Activated naive CD8-positive, alpha-beta T cell treated with anti-CD3 and anti-CD28 coated beads, Interleukin-2, amount 10 ng/mL, durations not matched to agents 7 days and 5 days (primary cell): ENCODE measurements at regions of chr16 and their contacts with region 1.

Region 1: GRCh38 chr16:70289229-70290098 is at the start of gene AARS1:
- DNase-seq: peak; percentile 93
- ATAC-seq: peak; percentile 97
- H3K4me3 Mint-ChIP-seq: peak within 1 kb of the TSS; percentile 99
- H3K27ac Mint-ChIP-seq: peak within 1 kb of the TSS; percentile 99
- H3K4me1 Mint-ChIP-seq: peaks cover 24% of the 10 kb centered on the region
- H3K27me3 Mint-ChIP-seq: no peaks in the 10 kb centered on the region
- total RNA-seq, gene AARS1: 121 to 122 TPM

Region 2: DNA sequence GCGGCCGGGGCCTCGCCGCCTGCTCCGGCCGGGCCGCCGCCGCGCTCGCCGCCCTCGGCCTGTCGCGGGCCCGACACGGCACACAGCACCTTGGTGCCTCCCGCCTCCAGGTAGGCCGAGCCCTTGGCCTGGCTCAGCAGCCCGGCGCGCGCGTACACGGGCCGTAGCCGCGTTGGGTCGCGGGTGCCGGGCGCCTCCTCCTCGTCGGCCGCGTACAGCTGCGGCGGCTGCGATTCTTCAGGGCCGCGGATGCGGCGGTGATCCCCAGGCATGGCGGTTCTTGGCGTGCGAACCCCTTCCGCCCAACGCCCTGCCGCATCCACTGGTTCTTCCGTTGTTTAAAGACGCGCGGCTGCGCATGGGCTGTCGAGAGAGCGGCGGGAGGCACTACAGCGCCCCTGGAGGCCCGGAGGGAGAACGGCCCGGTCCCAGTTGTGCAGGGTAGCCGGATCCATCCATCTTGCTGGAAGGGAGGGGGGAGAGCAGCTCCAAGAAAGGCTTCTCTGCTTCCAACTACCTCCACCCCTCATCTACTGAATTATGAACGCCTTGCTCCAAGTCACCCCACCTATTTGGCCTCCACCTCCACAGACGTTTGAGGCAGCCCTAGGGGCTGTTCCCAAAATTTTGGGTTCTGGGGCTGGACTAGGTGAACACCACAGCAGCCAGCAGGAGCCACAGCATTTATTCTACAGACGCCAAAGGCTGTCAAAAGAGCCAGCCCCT is 37.7 kb before region 1 on chr16 and contains the start of gene EXOSC6:
- POLR2A ChIA-PET with region 1: interaction called, 21 read pairs
- DNase-seq: peak; percentile 93
- ATAC-seq: peak; percentile 86
- H3K4me3 Mint-ChIP-seq: peak within 1 kb of the TSS; percentile 88
- H3K27ac Mint-ChIP-seq: peak within 1 kb of the TSS; percentile 92
- H3K4me1 Mint-ChIP-seq: peaks cover 14% of the 10 kb centered on the region
- H3K27me3 Mint-ChIP-seq: no peaks in the 10 kb centered on the region
- total RNA-seq, gene EXOSC6: 28.8 to 29.4 TPM

Region 3: GRCh38 chr16:70276392-70276791 is 13.1 kb before region 1 on chr16:
- POLR2A ChIA-PET with region 1: interaction called, 10 read pairs
- DNase-seq: no peak
- ATAC-seq: no peak
- H3K4me3 Mint-ChIP-seq: no peak overlapping the region
- H3K27ac Mint-ChIP-seq: no peak overlapping the region
- H3K4me1 Mint-ChIP-seq: peaks cover 6% of the 10 kb centered on the region
- H3K27me3 Mint-ChIP-seq: no peaks in the 10 kb centered on the region

Region 4: GRCh38 chr16:70320121-70320520 is 30.7 kb after region 1 on chr16:
- POLR2A ChIA-PET with region 1: no interaction called
- DNase-seq: no peak
- ATAC-seq: no peak
- H3K4me3 Mint-ChIP-seq: no peak overlapping the region
- H3K27ac Mint-ChIP-seq: no peak overlapping the region
- H3K4me1 Mint-ChIP-seq: peaks cover 1% of the 10 kb centered on the region
- H3K27me3 Mint-ChIP-seq: no peaks in the 10 kb centered on the region

Region 5: DNA sequence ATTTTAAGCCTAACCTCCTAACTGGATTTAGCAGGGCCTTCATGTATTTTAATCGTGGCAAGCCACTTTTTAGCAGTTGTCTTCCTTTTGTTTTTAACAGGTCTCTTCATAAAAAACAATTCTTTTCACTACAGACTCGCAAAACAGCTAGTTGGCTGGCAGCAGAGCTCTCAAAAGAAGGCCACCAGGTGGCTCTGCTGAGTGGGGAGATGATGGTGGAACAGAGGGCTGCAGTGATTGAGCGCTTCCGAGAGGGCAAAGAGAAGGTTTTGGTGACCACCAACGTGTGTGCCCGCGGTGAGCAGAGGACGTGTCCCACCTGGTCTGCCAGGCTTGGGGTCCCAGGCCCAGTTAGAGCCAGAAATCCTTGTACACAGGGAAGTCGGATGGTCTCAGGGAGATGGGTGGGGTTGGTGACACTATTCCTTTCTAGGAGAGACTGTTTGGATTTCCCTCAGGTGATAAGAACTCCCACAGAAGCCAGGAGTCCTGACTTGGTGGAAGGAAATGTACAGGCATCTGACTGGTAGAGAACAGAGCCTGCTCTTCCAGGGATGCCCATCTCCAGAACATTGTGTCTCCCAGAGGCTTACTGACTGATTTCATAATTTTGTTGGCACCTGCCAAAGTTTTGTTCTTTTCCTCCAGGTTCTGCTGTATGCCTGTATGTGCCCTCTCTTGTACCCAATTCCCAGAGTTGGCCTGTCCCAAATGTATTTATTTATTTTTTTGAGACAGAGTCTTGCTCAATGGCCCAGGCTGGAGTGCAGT is 42.3 kb after region 1 on chr16:
- POLR2A ChIA-PET with region 1: no interaction called
- DNase-seq: no peak
- ATAC-seq: peak; percentile 45
- H3K4me3 Mint-ChIP-seq: no peak overlapping the region
- H3K27ac Mint-ChIP-seq: no peak overlapping the region
- H3K4me1 Mint-ChIP-seq: no peaks in the 10 kb centered on the region
- H3K27me3 Mint-ChIP-seq: no peaks in the 10 kb centered on the region

Region 6: DNA sequence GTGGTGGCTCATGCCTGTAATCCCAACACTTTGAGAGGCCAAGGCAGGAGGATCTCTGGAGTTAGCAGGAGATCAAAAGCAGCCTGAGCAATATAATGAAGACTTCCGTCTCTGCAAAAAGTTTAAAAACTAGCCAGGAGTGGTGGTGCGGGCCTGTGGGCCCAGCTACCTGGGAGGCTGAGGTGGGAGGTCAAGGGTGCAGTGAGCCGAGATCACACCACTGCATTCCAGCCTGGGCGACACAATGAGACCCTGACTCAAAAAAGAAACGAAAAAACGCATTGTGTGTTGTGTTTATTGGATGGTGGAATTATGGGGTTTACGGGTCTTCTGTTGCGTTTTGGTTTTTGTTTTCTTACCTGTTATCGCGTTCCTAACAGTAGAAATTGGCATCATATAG is 56.4 kb after region 1 on chr16:
- POLR2A ChIA-PET with region 1: interaction called, 19 read pairs
- DNase-seq: no peak
- ATAC-seq: no peak
- H3K4me3 Mint-ChIP-seq: peak overlapping the region; percentile 97
- H3K27ac Mint-ChIP-seq: peak overlapping the region; percentile 98
- H3K4me1 Mint-ChIP-seq: peaks cover 30% of the 10 kb centered on the region
- H3K27me3 Mint-ChIP-seq: no peaks in the 10 kb centered on the region

Region 7: GRCh38 chr16:70523076-70523742 is 233.7 kb after region 1 on chr16 and contains the start of gene COG4:
- POLR2A ChIA-PET with region 1: interaction called, 15 read pairs
- DNase-seq: peak; percentile 88
- ATAC-seq: peak; percentile 70
- H3K4me3 Mint-ChIP-seq: peak within 1 kb of the TSS; percentile 97
- H3K27ac Mint-ChIP-seq: peak within 1 kb of the TSS; percentile 98
- H3K4me1 Mint-ChIP-seq: peaks cover 38% of the 10 kb centered on the region
- H3K27me3 Mint-ChIP-seq: no peaks in the 10 kb centered on the region
- total RNA-seq, gene COG4: 73.8 to 75.3 TPM